Left colon (tissue), 2 donors: ENCODE measurements at regions of chr1 and their contacts with region 1.

Region 1: GRCh38 chr1:112390775-112391602 is 5.0 kb upstream of the CTTNBP2NL start:
- DNase-seq: peak; percentile 90 to 91
- ATAC-seq: peak; percentile 60

Region 2: DNA sequence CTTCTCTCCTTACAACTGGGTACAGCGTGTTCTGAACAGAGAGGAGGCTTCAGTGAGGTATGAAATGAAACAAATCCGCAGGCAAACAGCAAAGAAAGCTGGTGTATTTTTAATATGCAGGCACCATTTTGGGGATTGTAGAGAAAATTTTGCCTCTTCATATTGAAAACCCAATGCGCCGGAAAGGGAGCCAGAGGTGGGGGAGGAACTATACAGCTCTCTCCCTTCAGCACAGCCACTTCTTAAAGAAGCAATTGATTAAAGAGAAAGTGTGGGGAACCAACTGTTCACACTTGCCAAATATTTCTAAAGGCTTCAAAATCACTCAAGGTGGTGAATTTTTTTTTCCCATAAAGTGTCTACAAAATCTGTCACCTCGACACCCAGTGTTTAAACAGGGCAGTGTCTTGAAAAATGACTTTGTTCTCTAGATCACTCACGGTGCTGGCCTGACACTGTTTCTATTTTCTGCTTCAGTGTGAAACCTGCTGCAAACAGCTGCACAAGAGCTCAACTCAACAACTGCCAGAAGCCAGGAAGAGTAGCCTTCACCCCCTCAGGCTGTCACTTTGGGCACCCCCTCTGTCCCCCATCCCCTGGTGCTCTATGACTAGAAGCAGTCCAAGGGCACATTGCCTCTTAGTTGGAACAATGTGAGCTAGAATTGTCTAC is 118.8 kb before region 1 on chr1:
- intact Hi-C with region 1: no loop called
- DNase-seq: no peak
- ATAC-seq: no peak

Region 3: GRCh38 chr1:112466078-112466660 is 75.2 kb after region 1 on chr1:
- intact Hi-C with region 1: loop called (anchors 5 to 10 kb)
- DNase-seq: peak; percentile 95 to 98
- ATAC-seq: peak; percentile 82

Region 4: DNA sequence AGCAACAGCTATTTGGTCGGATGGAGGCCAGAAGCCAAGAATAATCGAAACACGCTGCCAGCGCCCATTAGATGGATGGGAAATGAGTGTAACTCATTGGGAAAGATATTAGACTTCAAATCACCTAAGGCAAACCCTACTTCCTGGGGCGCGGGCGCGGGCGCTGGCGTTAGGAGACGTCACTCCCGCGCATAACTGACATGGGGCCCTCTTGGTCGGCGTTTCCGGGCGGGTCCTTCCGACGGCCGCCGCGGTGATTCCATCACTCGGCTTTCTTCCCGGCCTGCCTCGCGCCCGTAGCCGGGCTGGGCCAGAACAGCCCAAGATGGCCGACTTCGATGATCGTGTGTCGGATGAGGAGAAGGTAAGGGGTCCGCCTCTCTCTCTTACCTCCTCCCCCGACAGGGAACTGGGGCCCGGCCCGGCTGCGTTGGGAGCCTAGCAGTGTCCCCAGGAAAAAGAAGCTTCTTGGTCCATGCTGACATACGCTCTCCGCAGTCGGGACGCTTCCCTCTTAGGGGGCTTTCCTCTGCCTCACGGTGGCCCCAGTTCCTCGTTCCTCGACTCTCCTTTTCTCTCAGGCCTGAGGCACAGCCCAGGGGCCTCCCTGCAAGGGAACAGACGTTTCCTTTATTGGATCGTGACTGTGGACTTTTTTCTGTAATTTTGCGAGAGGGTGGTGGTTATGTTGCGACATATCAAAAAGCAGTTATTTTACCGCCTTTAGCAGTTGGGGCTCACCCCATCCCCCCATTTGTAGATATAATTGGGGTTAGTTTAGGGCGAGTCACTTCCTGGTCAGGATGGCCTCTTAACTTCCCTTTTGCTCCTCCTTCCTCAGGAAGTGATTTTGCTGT is 228.8 kb after region 1 on chr1 and contains the start of gene CAPZA1:
- intact Hi-C with region 1: loop called in 1 of 2 experiments (anchors 10 kb)
- DNase-seq: peak; percentile 94
- ATAC-seq: peak; percentile 90
- total RNA-seq, gene CAPZA1: 161 to 162 TPM

Region 5: DNA sequence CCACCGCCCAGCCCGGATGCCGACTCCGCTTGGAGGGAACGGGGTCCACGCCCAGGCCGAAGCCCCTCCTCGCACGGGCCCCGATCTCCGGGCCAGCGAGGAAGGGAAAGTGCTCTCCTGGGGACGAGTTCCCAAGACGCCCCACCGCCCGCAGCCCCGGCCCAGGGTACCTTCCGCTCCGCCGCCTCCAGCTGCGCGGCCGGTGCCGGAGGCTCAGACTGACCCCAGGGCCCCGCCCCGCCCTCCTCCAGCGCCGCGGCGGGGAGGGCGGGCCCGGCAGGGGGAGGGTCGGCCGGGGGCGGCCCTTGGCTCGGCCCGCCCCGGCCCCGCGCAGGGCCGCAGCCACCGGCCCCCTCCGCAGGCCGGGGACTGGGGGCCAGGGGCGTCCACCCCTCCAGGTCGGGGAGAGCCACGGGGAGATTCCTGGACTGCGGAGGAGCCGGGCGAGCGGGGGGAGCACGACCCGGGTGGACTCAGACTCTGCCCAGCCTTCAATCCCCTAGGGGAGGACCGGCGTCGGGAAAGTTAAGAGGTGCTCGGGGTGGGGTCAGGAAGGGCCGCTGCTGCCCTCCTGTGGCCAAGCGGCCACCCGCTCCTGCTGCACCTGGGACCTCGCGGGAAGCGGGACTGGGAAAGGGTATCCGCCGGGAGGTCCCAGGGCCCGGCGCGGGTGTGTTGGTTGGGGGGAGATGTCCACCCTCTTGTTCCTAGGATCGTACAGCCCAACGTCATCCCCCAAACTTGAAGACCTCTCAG is 316.1 kb after region 1 on chr1 and contains the start of gene RHOC:
- intact Hi-C with region 1: loop called in 1 of 2 experiments (anchors 5 kb)
- DNase-seq: peak; percentile 89 to 90
- ATAC-seq: peak; percentile 69
- total RNA-seq, gene RHOC: 466 to 701 TPM